ENCODE measurements at regions of chr14 and their contacts with region 1.

Region 1: DNA sequence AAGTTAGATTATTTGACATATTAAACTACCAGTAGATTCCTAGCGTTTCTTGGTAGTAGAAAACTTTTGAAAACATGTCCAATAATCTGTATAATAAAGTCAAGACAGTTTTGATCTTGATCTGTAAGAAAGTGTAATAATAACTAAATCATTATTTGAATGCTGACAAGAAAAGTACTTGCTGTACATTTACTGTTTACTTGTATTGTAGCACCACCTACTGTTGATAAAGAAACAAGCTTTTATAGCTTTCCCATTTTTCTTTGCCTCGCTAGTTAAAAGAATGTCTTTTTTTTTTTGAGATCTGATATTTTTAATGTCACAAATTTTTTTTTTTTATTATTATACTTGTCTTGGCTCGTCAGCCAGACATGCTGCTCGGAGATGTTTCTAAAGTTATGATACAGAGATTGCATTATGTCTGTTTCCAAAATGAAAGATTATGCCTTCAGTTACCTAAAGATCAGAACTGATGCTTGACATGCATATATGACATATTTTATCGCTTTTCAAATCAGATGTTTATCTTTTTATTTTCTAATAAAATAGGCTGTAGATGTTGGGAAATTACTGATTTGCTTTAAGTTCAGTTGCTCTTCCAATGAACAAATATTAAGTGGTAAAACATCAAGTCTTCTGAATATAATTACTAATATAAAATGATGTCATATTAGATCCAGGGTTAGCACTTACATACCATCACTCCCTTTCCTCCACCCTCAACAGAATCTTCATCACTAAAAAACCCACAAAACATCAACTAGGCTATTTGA is 140.5 kb downstream of the AKAP6 start:
- DNase-seq: no peak
- ATAC-seq: no peak

Region 2: DNA sequence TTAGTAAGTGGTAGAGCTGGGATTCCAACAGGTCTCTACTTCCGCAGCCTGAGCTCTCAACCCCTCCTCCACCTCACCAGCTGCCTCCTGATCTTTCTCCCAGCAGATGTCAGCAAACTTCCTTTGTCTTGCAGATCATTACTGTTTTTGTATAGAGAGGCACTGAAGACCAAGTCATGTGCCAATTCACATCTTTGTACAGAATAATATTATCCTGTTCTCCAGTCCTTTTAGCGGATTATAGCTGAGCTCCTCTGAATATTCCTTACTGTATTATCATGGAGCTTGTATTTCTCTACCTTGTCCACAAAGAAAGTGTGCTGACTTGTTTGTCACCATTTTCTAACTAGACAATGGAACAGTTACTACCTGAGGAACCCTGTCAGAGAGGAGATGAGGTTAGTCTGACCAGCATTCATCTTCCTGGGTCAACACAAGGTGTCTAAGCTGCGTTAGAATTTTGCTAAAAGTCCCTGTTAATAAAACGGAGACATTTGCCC is 534.8 kb before region 1 on chr14:
- intact Hi-C with region 1: loop called (anchors 5 kb)
- DNase-seq: no peak
- ATAC-seq: peak; percentile 78

Region 3: DNA sequence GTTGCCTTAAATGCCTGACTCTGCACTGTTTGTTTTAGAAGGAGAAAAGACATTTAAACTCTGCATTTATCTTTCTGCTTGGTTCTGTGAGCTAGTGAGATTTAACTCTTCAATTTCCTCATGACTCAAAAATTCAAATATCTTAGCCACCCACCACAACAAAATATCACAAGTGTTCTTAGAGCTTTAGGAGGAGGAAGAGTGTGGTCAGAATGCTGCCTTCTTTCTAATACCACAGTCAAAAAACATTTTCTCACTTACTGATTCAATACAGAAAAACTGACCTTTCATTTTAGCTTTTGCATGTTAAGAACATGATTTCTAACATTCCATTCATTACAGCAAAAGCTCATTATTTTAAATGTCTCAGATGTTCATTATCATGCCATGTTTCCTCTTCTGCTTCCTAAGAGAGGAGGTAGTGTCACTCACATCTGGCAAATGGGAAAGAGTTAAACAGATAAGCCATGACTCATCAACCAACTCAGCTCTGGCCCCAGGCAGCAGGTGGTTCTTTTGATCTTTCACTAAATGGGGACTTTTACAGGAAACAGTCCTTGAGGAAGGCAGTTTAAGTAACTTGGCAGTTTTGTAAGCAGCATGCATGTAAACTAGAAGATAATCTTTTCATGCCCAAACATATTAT is 210.1 kb before region 1 on chr14:
- intact Hi-C with region 1: loop called (anchors 2 kb)
- DNase-seq: no peak
- ATAC-seq: no peak

Region 4: GRCh38 chr14:32509632-32510187 is 40.1 kb after region 1 on chr14:
- intact Hi-C with region 1: loop called (anchors 5 kb)
- DNase-seq: peak; percentile 60
- ATAC-seq: peak; percentile 92

Region 5: GRCh38 chr14:32560209-32560857 is 90.8 kb after region 1 on chr14:
- intact Hi-C with region 1: loop called (anchors 5 kb)
- DNase-seq: no peak
- ATAC-seq: peak; percentile 85

Region 6: DNA sequence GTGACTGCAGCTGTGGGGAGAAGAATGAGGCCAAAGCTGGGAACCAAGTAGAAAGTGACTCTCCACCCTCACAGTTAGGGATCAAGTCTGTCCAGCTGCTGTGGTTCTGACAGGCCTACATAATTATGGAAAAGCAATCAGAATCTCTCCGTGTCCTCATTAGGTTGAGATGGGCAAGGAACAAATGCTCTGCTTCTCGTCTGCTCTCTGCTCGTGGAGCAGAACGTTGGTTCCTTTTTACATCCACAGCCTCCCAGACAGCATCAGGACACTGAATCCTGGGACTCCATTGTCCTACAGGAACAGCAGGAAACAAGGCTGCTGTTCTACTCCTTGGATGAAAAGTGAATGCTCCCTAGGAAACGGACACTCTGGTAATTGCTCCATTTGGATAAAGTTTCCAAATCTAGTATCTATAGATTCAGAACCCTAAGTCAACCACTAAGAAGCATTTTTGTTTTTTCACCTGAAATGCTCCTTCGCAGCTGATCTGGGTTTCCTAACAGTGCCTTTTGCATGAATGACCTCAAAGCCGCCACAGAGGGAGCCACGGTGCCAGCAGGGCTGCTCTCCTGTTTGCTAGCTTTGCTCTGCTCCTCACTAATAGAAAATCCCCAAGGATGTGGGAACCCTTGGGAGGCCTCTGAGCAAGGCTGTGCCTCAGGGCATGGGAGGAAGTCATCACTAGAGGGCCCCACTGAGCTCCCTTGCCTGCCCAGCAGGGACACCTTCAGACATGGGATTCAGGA is 1379.3 kb after region 1 on chr14:
- intact Hi-C with region 1: no loop called
- DNase-seq: no peak
- ATAC-seq: peak; percentile 91

Measured in Right ventricle myocardium inferior (tissue), 1 donor.